BJ (cell line): ENCODE measurements at regions of chr17 and their contacts with region 1.

Region 1: GRCh38 chr17:67602956-67603355 is 114.8 kb upstream of the NOL11 start:
- DNase-seq: no peak
- H3K4me3 ChIP-seq: no peak overlapping the region
- H3K27me3 ChIP-seq: no peaks in the 10 kb centered on the region
- CTCF ChIP-seq: peak; percentile 42

Region 2: GRCh38 chr17:67441052-67441927 is 161.7 kb before region 1 on chr17:
- CTCF ChIA-PET with region 1: no interaction called
- POLR2A ChIA-PET with region 1: interaction called, 17 read pairs
- DNase-seq: peak; percentile 11
- H3K4me3 ChIP-seq: no peak overlapping the region
- H3K27me3 ChIP-seq: no peaks in the 10 kb centered on the region
- CTCF ChIP-seq: no peak

Region 3: GRCh38 chr17:67520252-67520906 is 82.6 kb before region 1 on chr17:
- CTCF ChIA-PET with region 1: no interaction called
- POLR2A ChIA-PET with region 1: no interaction called
- DNase-seq: no peak
- H3K4me3 ChIP-seq: no peak overlapping the region
- H3K27me3 ChIP-seq: no peaks in the 10 kb centered on the region
- CTCF ChIP-seq: no peak

Region 4: GRCh38 chr17:67615011-67615561 is 12.1 kb after region 1 on chr17:
- CTCF ChIA-PET with region 1: interaction called, 11 read pairs
- POLR2A ChIA-PET with region 1: no interaction called
- DNase-seq: no peak
- H3K4me3 ChIP-seq: no peak overlapping the region
- H3K27me3 ChIP-seq: no peaks in the 10 kb centered on the region
- CTCF ChIP-seq: no peak